HCT116 (cell line): ENCODE measurements at regions of chr4 and their contacts with region 1.

Region 1: DNA sequence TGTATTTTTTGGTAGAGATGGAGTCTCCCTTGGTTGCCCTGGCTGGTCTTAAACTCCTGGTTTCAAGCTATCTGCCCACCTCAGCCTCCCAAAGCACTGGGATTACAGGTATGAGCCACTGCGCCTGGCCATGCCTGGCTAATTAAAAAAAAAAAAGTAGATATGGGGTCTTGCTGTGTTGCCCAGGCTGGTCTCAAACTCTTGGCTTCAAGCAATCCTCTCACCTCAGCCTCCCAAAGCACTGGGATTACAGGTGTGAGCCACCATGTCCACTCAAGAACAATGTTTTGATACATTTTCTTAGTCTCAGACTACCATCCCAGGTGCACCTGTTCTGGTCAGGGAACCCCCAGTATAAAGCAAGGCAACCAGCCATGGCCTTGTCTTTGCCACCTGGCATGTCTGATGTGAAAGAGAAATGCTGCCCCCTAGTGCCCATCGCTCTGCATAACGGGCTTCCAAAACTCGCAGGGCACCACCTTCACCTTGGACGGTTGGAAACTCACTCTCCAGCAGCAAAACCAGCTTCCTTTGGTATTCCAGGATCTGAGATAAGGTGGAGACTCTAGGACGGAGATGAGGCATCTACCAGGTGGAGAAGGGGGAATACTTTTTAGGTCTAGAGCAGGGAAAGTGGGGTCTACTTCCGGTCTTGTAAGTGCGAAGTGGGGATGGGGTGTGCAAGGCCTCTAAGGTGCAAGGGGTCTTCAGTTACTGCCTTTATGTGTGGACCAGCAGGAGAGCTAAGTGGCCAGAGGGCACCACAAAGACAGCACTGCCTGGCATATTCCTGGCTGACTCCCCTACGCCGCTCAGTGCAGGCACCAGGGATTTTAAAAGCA is 47.7 kb upstream of the AFAP1 start:
- DNase-seq: peak; percentile 65
- ATAC-seq: peak; percentile 95
- H3K4me3 ChIP-seq: no peak overlapping the region
- H3K27ac ChIP-seq: no peak overlapping the region
- H3K4me1 ChIP-seq: no peaks in the 10 kb centered on the region
- H3K27me3 ChIP-seq: no peaks in the 10 kb centered on the region
- CTCF ChIP-seq: peak; percentile 85 to 90 (median 87)
- POLR2A ChIP-seq: no peak
- RAD21 ChIP-seq: peak; percentile 98

Region 2: GRCh38 chr4:7761720-7762119 is 225.6 kb before region 1 on chr4:
- CTCF ChIA-PET with region 1: interaction called, 7 read pairs
- POLR2A ChIA-PET with region 1: no interaction called
- RAD21 ChIA-PET with region 1: interaction called in 1 of 2 experiments, 3 read pairs
- intact Hi-C with region 1: loop called (anchors 2 kb)
- DNase-seq: peak; percentile 32
- ATAC-seq: peak; percentile 97
- H3K4me3 ChIP-seq: no peak overlapping the region
- H3K27ac ChIP-seq: no peak overlapping the region
- H3K4me1 ChIP-seq: peaks cover 0 to 4% of the 10 kb centered on the region in 2 experiments; a peak in 1 of 4 replicates
- H3K27me3 ChIP-seq: no peaks in the 10 kb centered on the region
- CTCF ChIP-seq: peak; percentile 35 to 83 (median 77); a peak in 5 of 6 replicates
- POLR2A ChIP-seq: no peak
- RAD21 ChIP-seq: peak; percentile 58

Region 3: DNA sequence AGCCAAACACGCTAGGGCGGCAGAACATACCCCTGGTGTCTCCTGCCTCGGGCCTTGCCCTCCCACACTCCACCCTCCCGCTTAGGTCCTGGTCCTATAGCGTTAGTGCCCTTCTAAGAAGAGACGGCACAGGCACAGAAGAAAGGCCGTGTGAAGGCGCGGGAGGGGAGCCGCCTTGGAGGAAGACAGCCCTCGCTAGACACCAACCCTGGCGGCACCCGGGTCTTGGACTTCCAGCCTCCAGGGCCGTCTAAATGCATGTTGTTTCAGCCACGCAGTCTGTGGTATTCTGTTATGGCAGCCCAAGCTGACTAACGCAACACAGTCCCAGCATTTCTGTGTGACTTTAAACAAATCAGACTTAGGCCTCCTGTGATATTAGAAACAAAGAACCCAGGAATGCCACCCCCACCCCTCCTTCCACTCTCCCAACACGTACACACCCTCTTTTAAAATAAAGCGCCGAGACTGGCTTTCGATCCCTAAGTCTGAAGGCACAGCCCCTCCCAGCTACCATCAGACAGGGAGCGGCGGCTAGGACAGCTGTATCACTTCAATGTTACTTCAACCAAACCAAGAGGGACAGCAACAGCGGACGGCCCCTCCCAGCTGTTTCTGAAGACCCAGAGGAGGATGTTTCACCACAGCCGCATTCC is 175.7 kb before region 1 on chr4:
- CTCF ChIA-PET with region 1: no interaction called
- POLR2A ChIA-PET with region 1: no interaction called
- RAD21 ChIA-PET with region 1: no interaction called
- intact Hi-C with region 1: no loop called
- DNase-seq: no peak
- ATAC-seq: no peak
- H3K4me3 ChIP-seq: no peak overlapping the region
- H3K27ac ChIP-seq: no peak overlapping the region
- H3K4me1 ChIP-seq: no peaks in the 10 kb centered on the region
- H3K27me3 ChIP-seq: no peaks in the 10 kb centered on the region
- CTCF ChIP-seq: no peak
- POLR2A ChIP-seq: no peak
- RAD21 ChIP-seq: no peak

Region 4: GRCh38 chr4:8002525-8003309 is 15.3 kb after region 1 on chr4:
- CTCF ChIA-PET with region 1: no interaction called
- POLR2A ChIA-PET with region 1: no interaction called
- RAD21 ChIA-PET with region 1: no interaction called
- intact Hi-C with region 1: no loop called
- DNase-seq: no peak
- ATAC-seq: no peak
- H3K4me3 ChIP-seq: no peak overlapping the region
- H3K27ac ChIP-seq: no peak overlapping the region
- H3K4me1 ChIP-seq: no peaks in the 10 kb centered on the region
- H3K27me3 ChIP-seq: no peaks in the 10 kb centered on the region
- CTCF ChIP-seq: no peak
- POLR2A ChIP-seq: no peak
- RAD21 ChIP-seq: no peak

Region 5: GRCh38 chr4:8158710-8159536 is 171.6 kb after region 1 on chr4 and contains the start of gene ABLIM2:
- CTCF ChIA-PET with region 1: no interaction called
- POLR2A ChIA-PET with region 1: no interaction called
- RAD21 ChIA-PET with region 1: no interaction called
- intact Hi-C with region 1: no loop called
- DNase-seq: peak; percentile 91
- ATAC-seq: peak; percentile 98
- H3K4me3 ChIP-seq: peak within 1 kb of the TSS; percentile 57 to 74
- H3K27ac ChIP-seq: peak within 1 kb of the TSS; percentile 42; the same call in 1 of the 2 replicates
- H3K4me1 ChIP-seq: peaks cover 10 to 30% of the 10 kb centered on the region in 2 experiments
- H3K27me3 ChIP-seq: no peaks in the 10 kb centered on the region
- CTCF ChIP-seq: no peak
- POLR2A ChIP-seq: peak; percentile 56
- RAD21 ChIP-seq: no peak
- total RNA-seq, gene ABLIM2: 6.1 TPM